ENCODE measurements at regions of chr12 and their contacts with region 1.

Region 1: DNA sequence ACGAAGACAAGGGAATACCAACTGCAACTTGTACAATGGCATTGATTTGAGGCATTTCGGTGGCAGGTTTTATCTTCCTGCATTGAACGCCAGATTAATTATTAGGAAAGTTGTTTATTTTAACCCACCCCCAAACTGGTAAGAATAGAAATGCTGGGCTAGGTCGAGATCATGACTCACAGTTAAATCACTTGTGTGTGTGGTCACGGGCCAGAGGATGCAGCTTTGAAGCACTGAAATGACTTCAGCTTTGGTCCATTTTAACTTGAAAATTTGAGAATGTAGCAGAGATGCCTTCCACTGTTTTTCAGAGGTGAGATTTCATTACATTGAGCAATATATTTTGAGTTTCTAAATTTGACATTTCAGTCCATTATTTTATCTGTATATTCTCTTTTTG is 23.6 kb upstream of the KCNH3 start:
- DNase-seq: no peak
- CTCF ChIP-seq: no peak

Region 2: DNA sequence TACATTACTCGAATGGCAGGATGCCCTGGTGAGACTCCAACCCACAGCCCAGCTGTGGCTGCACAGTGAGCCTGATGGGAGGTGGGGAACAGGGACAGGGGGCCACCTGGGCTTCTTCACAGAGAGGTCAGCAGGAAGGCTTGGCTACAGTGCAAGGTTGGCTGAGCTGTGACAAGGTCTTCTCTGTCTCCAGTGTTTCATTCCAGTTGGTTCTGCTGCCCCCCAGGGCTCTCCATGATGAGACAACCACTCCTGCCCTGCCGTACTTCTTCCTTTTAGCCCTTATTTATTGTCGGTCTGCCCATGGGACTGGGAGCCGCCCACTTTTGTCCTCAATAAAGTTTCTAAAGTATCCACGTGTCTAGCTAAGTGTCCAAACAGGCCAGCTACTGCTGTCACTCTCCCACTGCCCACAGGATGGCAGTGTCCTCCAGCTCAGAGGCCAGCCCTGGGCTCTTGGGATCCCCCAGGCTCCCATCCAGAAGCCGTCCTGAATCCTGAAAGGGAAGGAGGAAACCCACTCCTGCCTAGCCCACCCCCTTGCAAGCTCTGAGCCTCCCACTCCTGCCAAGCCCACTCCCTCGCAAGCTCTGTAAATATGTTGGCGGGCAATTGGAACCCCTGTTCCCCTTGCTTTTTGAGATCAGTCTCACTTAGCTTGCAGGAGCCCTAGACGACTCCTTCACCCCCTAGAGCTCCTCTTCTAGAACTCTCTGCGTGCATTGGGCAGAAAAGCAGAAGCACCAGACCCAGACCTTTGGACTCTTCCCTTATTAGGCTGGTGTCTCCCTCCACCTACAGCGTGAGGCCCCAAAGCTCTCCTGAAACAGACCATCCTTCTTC is 183.7 kb before region 1 on chr12:
- CTCF ChIA-PET with region 1: interaction called, 13 read pairs
- POLR2A ChIA-PET with region 1: no interaction called
- DNase-seq: peak; percentile 16
- CTCF ChIP-seq: peak; percentile 70

Region 3: GRCh38 chr12:49347384-49348237 is 167.7 kb before region 1 on chr12:
- CTCF ChIA-PET with region 1: interaction called, 22 read pairs
- POLR2A ChIA-PET with region 1: no interaction called
- DNase-seq: peak; percentile 90
- CTCF ChIP-seq: peak; percentile 95

Region 4: GRCh38 chr12:49496417-49497360 is 18.6 kb before region 1 on chr12:
- CTCF ChIA-PET with region 1: interaction called, 40 read pairs
- POLR2A ChIA-PET with region 1: no interaction called
- DNase-seq: no peak
- CTCF ChIP-seq: no peak

Region 5: GRCh38 chr12:49527361-49528130 is 12.3 kb after region 1 on chr12:
- CTCF ChIA-PET with region 1: interaction called, 37 read pairs
- POLR2A ChIA-PET with region 1: no interaction called
- DNase-seq: no peak
- CTCF ChIP-seq: no peak

Region 6: GRCh38 chr12:49580572-49581535 is 65.6 kb after region 1 on chr12:
- CTCF ChIA-PET with region 1: interaction called, 27 read pairs
- POLR2A ChIA-PET with region 1: no interaction called
- DNase-seq: peak; percentile 79
- CTCF ChIP-seq: peak; percentile 91

Measured in GM10248 (cell line).